ENCODE measurements at regions of chr12 and their contacts with region 1.

Region 1: GRCh38 chr12:46124848-46125619 is 134.7 kb upstream of the SCAF11 start:
- DNase-seq: no peak
- ATAC-seq: peak; percentile 92
- H3K4me3 ChIP-seq: no peak overlapping the region
- H3K27ac ChIP-seq: no peak overlapping the region
- H3K4me1 ChIP-seq: no peaks in the 10 kb centered on the region
- H3K27me3 ChIP-seq: no peaks in the 10 kb centered on the region

Region 2: DNA sequence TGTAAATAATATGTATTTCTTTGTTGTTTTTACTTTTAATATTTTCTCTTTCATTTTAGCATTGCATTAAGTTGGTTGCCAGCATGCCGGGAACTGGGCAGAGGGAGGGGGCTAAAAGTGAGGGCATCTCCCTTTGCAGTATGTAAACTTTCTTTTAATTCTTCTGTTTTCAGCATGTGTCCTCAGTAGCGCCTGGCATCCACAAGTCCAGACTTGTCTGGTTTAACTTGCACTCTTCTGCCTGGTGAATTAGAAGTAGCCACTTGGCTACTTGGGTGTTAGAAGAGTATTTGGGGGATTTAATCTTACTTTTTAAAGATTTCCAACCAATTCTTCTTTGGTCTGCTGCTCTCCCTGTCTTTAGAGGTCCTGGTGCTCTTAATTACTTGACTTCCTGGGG is 17.4 kb before region 1 on chr12:
- intact Hi-C with region 1: loop called in 1 of 2 experiments (anchors 2 kb)
- DNase-seq: no peak
- ATAC-seq: no peak
- H3K4me3 ChIP-seq: no peak overlapping the region
- H3K27ac ChIP-seq: no peak overlapping the region
- H3K4me1 ChIP-seq: no peaks in the 10 kb centered on the region
- H3K27me3 ChIP-seq: no peaks in the 10 kb centered on the region

Region 3: GRCh38 chr12:46675736-46676135 is 550.7 kb after region 1 on chr12:
- intact Hi-C with region 1: loop called in 1 of 2 experiments (anchors 10 kb)
- DNase-seq: peak in 1 of 2 donors; percentile 49
- ATAC-seq: no peak
- H3K4me3 ChIP-seq: no peak overlapping the region
- H3K27ac ChIP-seq: no peak overlapping the region
- H3K4me1 ChIP-seq: no peaks in the 10 kb centered on the region
- H3K27me3 ChIP-seq: no peaks in the 10 kb centered on the region

Region 4: GRCh38 chr12:46933947-46934346 is 808.9 kb after region 1 on chr12:
- intact Hi-C with region 1: loop called (anchors 10 kb)
- DNase-seq: no peak
- ATAC-seq: peak; percentile 62
- H3K4me3 ChIP-seq: no peak overlapping the region
- H3K27ac ChIP-seq: no peak overlapping the region
- H3K4me1 ChIP-seq: no peaks in the 10 kb centered on the region
- H3K27me3 ChIP-seq: no peaks in the 10 kb centered on the region